ENCODE measurements at regions of chr4 and their contacts with region 1.

Region 1: GRCh38 chr4:47836641-47837093 is 1.2 kb downstream of the CORIN start:
- DNase-seq: peak in 7 of 9 experiments; percentile 39 to 74 (median 53)
- ATAC-seq: peak; percentile 67
- H3K4me3 ChIP-seq: peak overlapping the region; percentile 66
- H3K4me3 Mint-ChIP-seq: peak overlapping the region; percentile 85
- H3K27ac ChIP-seq: no peak overlapping the region
- H3K27ac Mint-ChIP-seq: peak overlapping the region; percentile 37
- H3K4me1 ChIP-seq: peaks cover 14% of the 10 kb centered on the region
- H3K4me1 Mint-ChIP-seq: peaks cover 25% of the 10 kb centered on the region
- H3K27me3 ChIP-seq: no peaks in the 10 kb centered on the region
- H3K27me3 Mint-ChIP-seq: peaks cover 15% of the 10 kb centered on the region
- CTCF ChIP-seq: peak; percentile 34

Region 2: GRCh38 chr4:47674144-47674543 is 162.5 kb before region 1 on chr4:
- CTCF ChIA-PET with region 1: interaction called, 4 read pairs
- POLR2A ChIA-PET with region 1: no interaction called
- intact Hi-C with region 1: loop called in 1 of 2 experiments (anchors 2 kb)
- DNase-seq: no peak
- ATAC-seq: no peak
- H3K4me3 ChIP-seq: no peak overlapping the region
- H3K4me3 Mint-ChIP-seq: no peak overlapping the region
- H3K27ac ChIP-seq: no peak overlapping the region
- H3K27ac Mint-ChIP-seq: no peak overlapping the region
- H3K4me1 ChIP-seq: no peaks in the 10 kb centered on the region
- H3K4me1 Mint-ChIP-seq: no peaks in the 10 kb centered on the region
- H3K27me3 ChIP-seq: no peaks in the 10 kb centered on the region
- H3K27me3 Mint-ChIP-seq: peaks cover 9% of the 10 kb centered on the region
- CTCF ChIP-seq: no peak

Measured in CD8-positive, alpha-beta T cell (primary cell).